ENCODE measurements at regions of chr4 and their contacts with region 1.

Region 1: GRCh38 chr4:75653845-75654503 is 19.2 kb downstream of the G3BP2 start:
- DNase-seq: no peak
- H3K4me3 Mint-ChIP-seq: peak overlapping the region; percentile 43
- H3K27ac Mint-ChIP-seq: peak overlapping the region; percentile 90
- H3K4me1 Mint-ChIP-seq: peaks cover 71% of the 10 kb centered on the region
- H3K27me3 Mint-ChIP-seq: no peaks in the 10 kb centered on the region

Region 2: GRCh38 chr4:75637176-75637575 is 16.8 kb before region 1 on chr4:
- CTCF ChIA-PET with region 1: no interaction called
- POLR2A ChIA-PET with region 1: interaction called, 11 read pairs
- DNase-seq: no peak
- H3K4me3 Mint-ChIP-seq: no peak overlapping the region
- H3K27ac Mint-ChIP-seq: no peak overlapping the region
- H3K4me1 Mint-ChIP-seq: peaks cover 2% of the 10 kb centered on the region
- H3K27me3 Mint-ChIP-seq: no peaks in the 10 kb centered on the region

Region 3: GRCh38 chr4:75666299-75666698 is 12.3 kb after region 1 on chr4:
- CTCF ChIA-PET with region 1: interaction called, 6 read pairs
- POLR2A ChIA-PET with region 1: interaction called, 278 read pairs
- DNase-seq: no peak
- H3K4me3 Mint-ChIP-seq: peak overlapping the region; percentile 25
- H3K27ac Mint-ChIP-seq: peak overlapping the region; percentile 36
- H3K4me1 Mint-ChIP-seq: peaks cover 75% of the 10 kb centered on the region
- H3K27me3 Mint-ChIP-seq: no peaks in the 10 kb centered on the region

Region 4: GRCh38 chr4:75881476-75881875 is 227.5 kb after region 1 on chr4:
- CTCF ChIA-PET with region 1: no interaction called
- POLR2A ChIA-PET with region 1: no interaction called
- DNase-seq: no peak
- H3K4me3 Mint-ChIP-seq: no peak overlapping the region
- H3K27ac Mint-ChIP-seq: no peak overlapping the region
- H3K4me1 Mint-ChIP-seq: peaks cover 6% of the 10 kb centered on the region
- H3K27me3 Mint-ChIP-seq: peaks cover 14% of the 10 kb centered on the region